SK-N-SH (cell line): ENCODE measurements at regions of chr5 and their contacts with region 1.

Region 1: GRCh38 chr5:172697123-172698121 is 56.4 kb downstream of the NEURL1B start:
- DNase-seq: peak; percentile 87
- H3K4me3 ChIP-seq: peak overlapping the region; percentile 48 to 68
- H3K27ac ChIP-seq: no peak overlapping the region
- H3K4me1 ChIP-seq: peaks cover 0 to 20% of the 10 kb centered on the region in 2 experiments; a peak in 2 of 4 replicates
- H3K27me3 ChIP-seq: no peaks in the 10 kb centered on the region; the same call in 1 of the 2 replicates
- CTCF ChIP-seq: peak; percentile 89
- EP300 ChIP-seq: no peak
- RAD21 ChIP-seq: peak; percentile 96

Region 2: DNA sequence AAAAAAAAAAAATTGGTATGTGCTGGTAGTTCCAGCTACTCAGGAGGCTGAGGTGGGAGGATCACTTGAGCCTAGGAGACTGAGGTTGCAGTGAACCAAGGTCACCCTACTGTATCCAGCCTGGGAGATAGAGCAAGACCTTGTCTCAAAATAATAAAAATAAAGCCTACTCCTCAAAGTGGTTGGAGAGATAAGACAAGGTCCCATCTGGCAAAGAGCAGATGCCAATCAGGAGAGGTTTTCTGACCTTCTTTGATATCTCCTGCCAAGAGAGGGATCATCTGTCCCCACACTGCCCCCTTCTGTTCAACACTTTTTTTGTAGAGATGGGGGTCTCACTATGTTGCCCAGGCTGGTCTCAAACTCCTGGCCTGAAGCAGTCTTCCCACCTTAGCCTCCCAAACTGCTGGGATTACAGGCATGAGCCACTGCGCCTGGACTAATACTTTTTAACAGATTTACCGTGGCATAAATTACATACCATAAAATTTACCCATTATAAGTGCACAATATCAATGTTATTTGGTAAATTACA is 307.8 kb before region 1 on chr5:
- CTCF ChIA-PET with region 1: no interaction called
- POLR2A ChIA-PET with region 1: no interaction called
- DNase-seq: no peak
- H3K4me3 ChIP-seq: no peak overlapping the region
- H3K27ac ChIP-seq: no peak overlapping the region
- H3K4me1 ChIP-seq: no peaks in the 10 kb centered on the region
- H3K27me3 ChIP-seq: no peaks in the 10 kb centered on the region
- CTCF ChIP-seq: peak; percentile 37
- EP300 ChIP-seq: no peak
- RAD21 ChIP-seq: no peak

Region 3: GRCh38 chr5:172458976-172459782 is 238.2 kb before region 1 on chr5:
- CTCF ChIA-PET with region 1: interaction called, 46 read pairs
- POLR2A ChIA-PET with region 1: no interaction called
- DNase-seq: no peak
- H3K4me3 ChIP-seq: no peak overlapping the region
- H3K27ac ChIP-seq: no peak overlapping the region
- H3K4me1 ChIP-seq: peaks cover 5 to 11% of the 10 kb centered on the region in 2 experiments; a peak in 1 of 4 replicates
- H3K27me3 ChIP-seq: no peaks in the 10 kb centered on the region
- CTCF ChIP-seq: no peak
- EP300 ChIP-seq: no peak
- RAD21 ChIP-seq: no peak

Region 4: GRCh38 chr5:172479044-172479783 is 218.2 kb before region 1 on chr5:
- CTCF ChIA-PET with region 1: interaction called, 209 read pairs
- POLR2A ChIA-PET with region 1: no interaction called
- DNase-seq: peak; percentile 88
- H3K4me3 ChIP-seq: no peak overlapping the region; a peak in 1 of 4 replicates
- H3K27ac ChIP-seq: no peak overlapping the region
- H3K4me1 ChIP-seq: peaks cover 0 to 3% of the 10 kb centered on the region in 2 experiments; a peak in 1 of 4 replicates
- H3K27me3 ChIP-seq: no peaks in the 10 kb centered on the region
- CTCF ChIP-seq: peak; percentile 90
- EP300 ChIP-seq: no peak
- RAD21 ChIP-seq: peak; percentile 93

Region 5: GRCh38 chr5:172568308-172568910 is 129.0 kb before region 1 on chr5:
- CTCF ChIA-PET with region 1: interaction called, 11 read pairs
- POLR2A ChIA-PET with region 1: no interaction called
- DNase-seq: no peak
- H3K4me3 ChIP-seq: no peak overlapping the region
- H3K27ac ChIP-seq: no peak overlapping the region
- H3K4me1 ChIP-seq: peaks cover 0 to 4% of the 10 kb centered on the region in 2 experiments; a peak in 1 of 4 replicates
- H3K27me3 ChIP-seq: peaks cover 45% of the 10 kb centered on the region; the same call in 1 of the 2 replicates
- CTCF ChIP-seq: no peak
- EP300 ChIP-seq: no peak
- RAD21 ChIP-seq: no peak

Region 6: GRCh38 chr5:172659909-172660628 is 37.4 kb before region 1 on chr5:
- CTCF ChIA-PET with region 1: interaction called, 51 read pairs
- POLR2A ChIA-PET with region 1: no interaction called
- DNase-seq: peak; percentile 75
- H3K4me3 ChIP-seq: no peak overlapping the region
- H3K27ac ChIP-seq: peak overlapping the region; percentile 48 to 87
- H3K4me1 ChIP-seq: peaks cover 20 to 39% of the 10 kb centered on the region in 2 experiments
- H3K27me3 ChIP-seq: no peaks in the 10 kb centered on the region
- CTCF ChIP-seq: no peak
- EP300 ChIP-seq: peak in 1 of 2 experiments; percentile 16; a peak in 1 of 4 replicates
- RAD21 ChIP-seq: 0 out of 2 replicates have a peak, but pooled peaks have one; percentile 9

Region 7: DNA sequence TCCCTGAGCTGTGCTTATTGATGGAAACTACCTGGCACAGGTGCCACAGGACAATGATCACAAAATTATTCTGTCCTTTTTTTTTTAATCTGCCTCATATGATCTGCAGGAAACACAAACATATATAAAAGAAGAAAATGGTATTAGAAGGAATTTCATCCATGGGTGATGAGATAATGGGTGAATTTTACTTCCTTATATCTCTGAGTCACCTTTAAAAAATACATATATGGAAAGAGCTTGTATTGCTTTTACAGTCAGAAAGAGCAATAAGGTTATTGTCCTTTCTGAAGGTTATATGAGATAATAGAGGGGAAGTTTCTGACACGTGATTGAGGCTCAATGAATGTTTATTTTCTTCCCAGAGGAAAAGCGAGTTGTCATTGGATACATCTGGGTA is 24.7 kb before region 1 on chr5:
- CTCF ChIA-PET with region 1: interaction called, 51 read pairs
- POLR2A ChIA-PET with region 1: no interaction called
- DNase-seq: no peak
- H3K4me3 ChIP-seq: no peak overlapping the region
- H3K27ac ChIP-seq: peak overlapping the region in 1 of 2 experiments; percentile 49; a peak in 2 of 4 replicates
- H3K4me1 ChIP-seq: peaks cover 0 to 8% of the 10 kb centered on the region in 2 experiments; a peak in 2 of 4 replicates
- H3K27me3 ChIP-seq: no peaks in the 10 kb centered on the region
- CTCF ChIP-seq: no peak
- EP300 ChIP-seq: no peak
- RAD21 ChIP-seq: no peak

Region 8: DNA sequence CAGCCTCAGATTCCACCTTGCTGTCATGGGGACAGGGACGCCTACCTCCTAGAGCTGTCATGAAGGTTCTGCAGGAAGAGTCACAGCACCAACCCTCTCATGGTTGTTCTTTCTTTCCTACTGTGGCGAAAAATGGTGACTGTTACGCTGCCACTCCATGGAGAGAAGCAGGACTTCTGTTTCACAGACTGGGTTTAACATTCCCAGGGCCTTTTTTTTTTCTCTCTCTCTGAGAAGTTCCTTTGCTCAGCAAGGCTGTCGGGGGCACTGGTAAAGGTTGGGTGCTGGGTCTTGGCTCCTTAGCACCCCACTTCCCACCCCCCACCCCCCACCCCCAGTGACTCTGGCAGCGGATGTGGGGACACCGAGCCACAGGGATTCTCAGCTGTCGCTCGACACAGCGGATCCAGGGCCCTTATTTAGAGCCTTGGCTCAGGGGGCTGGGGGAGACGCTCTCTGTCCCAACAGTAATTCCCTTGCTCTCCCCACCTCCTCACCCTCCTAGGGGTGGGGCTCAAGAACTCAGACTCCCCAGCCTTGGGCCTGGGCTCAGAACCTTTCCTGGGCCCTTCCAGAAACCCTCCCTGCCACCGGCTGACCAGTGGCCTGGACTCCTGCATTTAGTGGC is 39.2 kb after region 1 on chr5:
- CTCF ChIA-PET with region 1: no interaction called
- POLR2A ChIA-PET with region 1: no interaction called
- DNase-seq: no peak
- H3K4me3 ChIP-seq: no peak overlapping the region
- H3K27ac ChIP-seq: no peak overlapping the region
- H3K4me1 ChIP-seq: peaks cover 0 to 7% of the 10 kb centered on the region in 2 experiments; a peak in 2 of 4 replicates
- H3K27me3 ChIP-seq: no peaks in the 10 kb centered on the region
- CTCF ChIP-seq: no peak; the same call in 1 of the 2 replicates
- EP300 ChIP-seq: no peak
- RAD21 ChIP-seq: no peak

Region 9: GRCh38 chr5:172932313-172933017 is 235.0 kb after region 1 on chr5:
- CTCF ChIA-PET with region 1: interaction called, 10 read pairs
- POLR2A ChIA-PET with region 1: no interaction called
- DNase-seq: peak; percentile 86
- H3K4me3 ChIP-seq: no peak overlapping the region; a peak in 1 of 4 replicates
- H3K27ac ChIP-seq: peak overlapping the region in 1 of 2 experiments; percentile 89; a peak in 2 of 4 replicates
- H3K4me1 ChIP-seq: peaks cover 0 to 19% of the 10 kb centered on the region in 2 experiments; a peak in 2 of 4 replicates
- H3K27me3 ChIP-seq: no peaks in the 10 kb centered on the region
- CTCF ChIP-seq: peak; percentile 91
- EP300 ChIP-seq: no peak
- RAD21 ChIP-seq: peak; percentile 87

Region 10: DNA sequence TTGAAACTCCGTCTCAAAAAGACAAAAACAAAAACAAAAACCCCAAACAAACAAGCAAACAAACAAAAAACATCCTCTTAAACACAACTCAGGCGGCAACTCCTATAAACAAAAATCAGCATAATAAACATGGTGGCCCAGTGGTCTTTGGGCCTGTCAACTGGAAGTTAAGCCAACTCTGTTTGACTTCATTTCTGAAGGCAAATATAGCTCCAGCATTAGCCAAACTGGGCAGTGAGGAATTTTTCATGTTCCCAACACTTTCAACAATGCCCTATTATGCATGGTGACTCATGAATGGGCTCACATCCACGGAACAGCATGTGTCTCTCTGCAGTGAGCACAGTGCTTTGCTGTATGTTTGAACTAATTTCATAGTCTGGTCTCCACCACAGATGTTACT is 774.7 kb after region 1 on chr5:
- CTCF ChIA-PET with region 1: no interaction called
- POLR2A ChIA-PET with region 1: no interaction called
- DNase-seq: no peak
- H3K4me3 ChIP-seq: no peak overlapping the region
- H3K27ac ChIP-seq: peak overlapping the region in 1 of 2 experiments; percentile 82; a peak in 2 of 4 replicates
- H3K4me1 ChIP-seq: peaks cover 0 to 13% of the 10 kb centered on the region in 2 experiments; a peak in 2 of 4 replicates
- H3K27me3 ChIP-seq: no peaks in the 10 kb centered on the region
- CTCF ChIP-seq: no peak
- EP300 ChIP-seq: peak in 1 of 2 experiments; percentile 48; a peak in 1 of 4 replicates
- RAD21 ChIP-seq: no peak